AG04449 (cell line): ENCODE measurements at regions of chr14 and their contacts with region 1.

Region 1: GRCh38 chr14:65211341-65211987 is 109.1 kb upstream of the MAX start:
- DNase-seq: no peak
- H3K4me3 ChIP-seq: no peak overlapping the region
- CTCF ChIP-seq: no peak

Region 2: GRCh38 chr14:65080960-65081747 is 130.3 kb before region 1 on chr14:
- CTCF ChIA-PET with region 1: no interaction called
- POLR2A ChIA-PET with region 1: no interaction called
- DNase-seq: no peak
- H3K4me3 ChIP-seq: no peak overlapping the region
- CTCF ChIP-seq: no peak

Region 3: GRCh38 chr14:65222440-65222858 is 11.0 kb after region 1 on chr14:
- CTCF ChIA-PET with region 1: interaction called, 16 read pairs
- POLR2A ChIA-PET with region 1: interaction called, 3 read pairs
- DNase-seq: no peak
- H3K4me3 ChIP-seq: no peak overlapping the region
- CTCF ChIP-seq: peak; percentile 77

Region 4: DNA sequence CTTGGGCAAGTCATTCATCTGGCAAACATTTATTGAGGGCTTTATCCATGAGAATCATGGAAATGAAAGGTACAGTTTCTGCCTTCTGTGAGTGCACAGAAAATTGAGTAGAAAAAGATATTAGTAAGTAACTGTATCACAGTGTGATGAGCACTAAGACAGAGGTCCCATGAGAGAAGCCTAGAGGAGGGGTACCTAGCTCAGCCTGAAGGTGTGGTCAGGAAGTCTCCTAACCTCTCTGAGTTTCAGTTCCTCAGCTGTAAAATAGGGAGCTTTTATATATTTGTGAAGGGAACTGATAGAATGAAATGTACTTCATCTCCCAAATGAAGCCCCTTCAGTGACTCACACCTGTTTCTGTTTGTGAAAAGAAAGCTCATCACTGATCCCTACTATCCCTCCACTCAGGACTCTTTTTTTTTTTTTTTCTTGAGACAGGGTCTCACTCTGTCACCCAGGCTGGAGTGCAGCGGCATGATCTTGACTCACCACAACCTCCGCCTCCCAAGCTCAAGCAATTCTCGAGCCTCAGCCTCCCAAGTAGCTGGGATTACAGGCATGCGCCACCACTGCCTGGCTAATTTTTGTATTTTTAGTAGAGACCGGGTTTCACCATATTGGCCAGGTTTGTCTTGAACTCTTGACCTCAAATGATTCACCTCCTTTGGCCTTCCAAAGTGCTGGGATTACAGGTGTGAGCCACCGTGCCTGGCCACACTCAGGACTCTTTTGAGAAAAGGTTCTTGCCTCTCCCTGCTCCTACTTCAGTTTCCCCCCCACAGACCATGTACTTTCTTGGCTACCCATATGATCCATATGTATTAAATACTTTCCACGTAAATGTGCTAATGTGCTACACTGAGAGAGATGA is 107.4 kb after region 1 on chr14:
- CTCF ChIA-PET with region 1: no interaction called
- POLR2A ChIA-PET with region 1: no interaction called
- DNase-seq: no peak
- H3K4me3 ChIP-seq: no peak overlapping the region
- CTCF ChIP-seq: no peak